Activated B cell treated with CpG ODN at 0.5 μM for 24 hours (primary cell): ENCODE measurements at regions of chr11 and their contacts with region 1.

Region 1: DNA sequence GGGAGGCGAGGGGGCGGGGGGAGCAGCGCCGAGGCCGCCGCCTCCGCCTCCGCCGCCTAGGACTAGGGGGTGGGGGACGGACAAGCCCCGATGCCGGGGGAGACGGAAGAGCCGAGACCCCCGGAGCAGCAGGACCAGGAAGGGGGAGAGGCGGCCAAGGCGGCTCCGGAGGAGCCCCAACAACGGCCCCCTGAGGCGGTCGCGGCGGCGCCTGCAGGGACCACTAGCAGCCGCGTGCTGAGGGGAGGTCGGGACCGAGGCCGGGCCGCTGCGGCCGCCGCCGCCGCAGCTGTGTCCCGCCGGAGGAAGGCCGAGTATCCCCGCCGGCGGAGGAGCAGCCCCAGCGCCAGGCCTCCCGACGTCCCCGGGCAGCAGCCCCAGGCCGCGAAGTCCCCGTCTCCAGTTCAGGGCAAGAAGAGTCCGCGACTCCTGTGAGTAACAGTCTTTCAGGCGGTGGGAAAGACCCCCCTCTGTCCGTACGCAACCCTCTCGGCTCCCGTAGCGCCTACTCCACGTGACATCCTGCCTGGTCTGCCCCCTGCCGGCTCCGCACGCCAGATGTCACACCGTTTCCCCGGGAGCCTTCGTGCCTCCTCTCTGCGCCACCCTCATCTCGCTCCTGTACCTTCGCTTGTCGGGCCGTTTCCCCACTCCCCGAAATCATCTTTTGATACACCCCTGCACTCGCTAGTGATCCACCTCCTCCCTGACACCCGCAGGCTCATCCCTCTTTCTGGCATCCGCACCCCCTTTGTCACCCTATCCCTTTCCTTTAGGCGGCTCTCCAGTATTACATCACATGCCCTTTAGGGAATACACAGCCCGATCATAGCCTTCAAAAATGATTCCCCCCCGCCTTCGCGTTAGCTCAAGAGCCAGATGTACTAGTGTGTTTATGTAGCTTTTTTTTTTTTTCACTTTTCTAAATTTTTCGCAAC is 598 bp downstream of the ZFP91 start:
- DNase-seq: peak; percentile 87
- ATAC-seq: peak; percentile 33
- H3K4me3 Mint-ChIP-seq: peak overlapping the region; percentile 96
- H3K27ac Mint-ChIP-seq: peak overlapping the region; percentile 100
- H3K4me1 Mint-ChIP-seq: peaks cover 79% of the 10 kb centered on the region
- H3K27me3 Mint-ChIP-seq: no peaks in the 10 kb centered on the region
- CTCF ChIP-seq: no peak

Region 2: DNA sequence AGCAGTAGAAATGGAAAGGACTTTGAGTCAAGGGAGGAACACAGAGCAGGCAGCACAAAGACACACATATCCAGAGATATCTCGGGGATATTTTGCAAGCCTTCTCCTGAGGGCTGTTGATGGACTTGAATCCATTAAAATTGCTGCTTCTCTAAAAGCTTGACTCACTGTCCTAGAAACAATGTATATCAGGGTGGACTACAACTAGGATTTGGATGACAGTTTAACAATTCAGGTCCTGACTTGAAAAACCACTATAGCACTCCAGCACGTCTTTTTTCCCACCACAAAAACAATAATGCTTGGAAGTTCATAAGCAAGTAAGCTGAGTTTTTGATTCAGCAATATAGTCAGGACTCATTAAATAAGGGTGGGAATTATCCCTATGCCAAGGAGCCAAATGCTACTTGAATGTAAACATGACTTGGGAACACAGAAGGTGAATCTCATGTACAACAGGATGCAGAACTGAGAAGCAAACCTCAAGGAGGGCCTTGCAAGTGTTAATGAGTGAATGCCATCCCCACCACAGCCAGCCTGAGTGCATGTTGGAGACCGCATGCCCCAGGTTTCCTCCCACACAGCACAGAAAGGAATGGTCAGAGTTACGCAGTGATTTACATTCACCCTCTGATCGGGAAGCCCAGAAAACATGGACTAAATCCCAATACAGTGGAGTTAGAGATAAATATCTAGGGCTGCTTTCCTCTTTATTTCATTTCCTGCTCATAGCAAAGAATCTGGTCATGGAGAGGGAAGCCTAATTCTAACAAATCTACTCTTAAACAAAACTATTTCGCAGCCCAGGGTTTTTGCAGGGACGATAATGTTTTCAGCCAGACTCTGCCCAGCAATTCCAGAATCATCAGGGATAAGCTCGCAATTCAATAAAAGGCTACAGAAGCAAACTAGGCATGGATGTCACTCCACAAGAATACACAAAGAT is 1732.6 kb before region 1 on chr11:
- CTCF ChIA-PET with region 1: no interaction called
- POLR2A ChIA-PET with region 1: no interaction called
- intact Hi-C with region 1: no loop called
- DNase-seq: no peak
- ATAC-seq: no peak
- H3K4me3 Mint-ChIP-seq: no peak overlapping the region
- H3K27ac Mint-ChIP-seq: no peak overlapping the region
- H3K4me1 Mint-ChIP-seq: no peaks in the 10 kb centered on the region
- H3K27me3 Mint-ChIP-seq: no peaks in the 10 kb centered on the region
- CTCF ChIP-seq: no peak

Region 3: GRCh38 chr11:57426929-57427726 is 1152.3 kb before region 1 on chr11 and contains the start of gene SLC43A3:
- CTCF ChIA-PET with region 1: no interaction called
- POLR2A ChIA-PET with region 1: interaction called, 6 read pairs
- intact Hi-C with region 1: loop called (anchors 2 kb)
- DNase-seq: peak; percentile 72
- ATAC-seq: peak; percentile 69
- H3K4me3 Mint-ChIP-seq: peak within 1 kb of the TSS; percentile 92
- H3K27ac Mint-ChIP-seq: peak within 1 kb of the TSS; percentile 91
- H3K4me1 Mint-ChIP-seq: peaks cover 47% of the 10 kb centered on the region
- H3K27me3 Mint-ChIP-seq: no peaks in the 10 kb centered on the region
- CTCF ChIP-seq: no peak
- total RNA-seq, gene SLC43A3: 213 and 237 TPM in 2 replicates

Region 4: DNA sequence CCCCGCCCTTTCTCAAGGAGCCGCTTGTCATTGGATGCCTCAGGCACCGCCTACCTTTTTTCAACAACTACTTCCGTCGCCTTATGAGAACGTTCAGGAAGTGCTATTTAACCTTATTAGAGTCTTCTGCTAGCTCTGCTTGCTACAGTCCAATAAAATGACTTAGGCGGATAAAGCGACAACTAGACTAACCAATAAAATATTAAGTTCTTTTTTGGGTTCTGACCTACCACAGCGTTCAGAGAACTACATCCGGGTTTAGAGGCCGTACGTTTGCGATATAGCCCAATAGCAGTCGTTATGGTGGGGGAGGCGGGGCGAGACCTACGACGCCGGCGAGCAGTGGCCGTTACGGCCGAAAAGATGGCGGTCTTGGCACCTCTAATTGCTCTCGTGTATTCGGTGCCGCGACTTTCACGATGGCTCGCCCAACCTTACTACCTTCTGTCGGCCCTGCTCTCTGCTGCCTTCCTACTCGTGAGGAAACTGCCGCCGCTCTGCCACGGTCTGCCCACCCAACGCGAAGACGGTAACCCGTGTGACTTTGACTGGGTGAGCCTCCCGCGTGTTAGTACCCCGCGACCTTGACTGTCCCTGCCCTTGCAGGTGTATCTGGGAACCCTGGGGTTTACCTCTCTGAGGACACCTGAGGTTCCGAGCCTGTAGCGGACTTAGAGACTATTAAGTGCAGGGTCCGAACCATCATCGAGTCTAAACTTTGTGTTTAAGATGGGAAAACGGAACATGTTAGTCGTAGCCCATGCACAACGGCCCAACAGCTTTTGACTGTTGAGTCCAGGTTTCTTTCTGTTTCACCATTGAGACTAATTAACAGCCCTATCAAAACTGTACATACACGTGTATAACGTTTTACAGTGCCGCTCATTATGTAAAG is 867.0 kb before region 1 on chr11 and contains the start of gene TMX2:
- CTCF ChIA-PET with region 1: no interaction called
- POLR2A ChIA-PET with region 1: no interaction called
- intact Hi-C with region 1: loop called (anchors 1 kb)
- DNase-seq: peak; percentile 75
- ATAC-seq: peak; percentile 87
- H3K4me3 Mint-ChIP-seq: peak within 1 kb of the TSS; percentile 98
- H3K27ac Mint-ChIP-seq: peak within 1 kb of the TSS; percentile 96
- H3K4me1 Mint-ChIP-seq: peaks cover 47% of the 10 kb centered on the region
- H3K27me3 Mint-ChIP-seq: no peaks in the 10 kb centered on the region
- CTCF ChIP-seq: no peak
- total RNA-seq, gene TMX2: 53.2 and 53.3 TPM in 2 replicates

Region 5: GRCh38 chr11:58609723-58610122 is 30.3 kb after region 1 on chr11:
- CTCF ChIA-PET with region 1: interaction called, 3 read pairs
- POLR2A ChIA-PET with region 1: interaction called, 35 read pairs
- intact Hi-C with region 1: loop called (anchors 1 kb)
- DNase-seq: no peak
- ATAC-seq: no peak
- H3K4me3 Mint-ChIP-seq: no peak overlapping the region
- H3K27ac Mint-ChIP-seq: peak overlapping the region; percentile 53
- H3K4me1 Mint-ChIP-seq: peaks cover 40% of the 10 kb centered on the region
- H3K27me3 Mint-ChIP-seq: no peaks in the 10 kb centered on the region
- CTCF ChIP-seq: no peak

Region 6: DNA sequence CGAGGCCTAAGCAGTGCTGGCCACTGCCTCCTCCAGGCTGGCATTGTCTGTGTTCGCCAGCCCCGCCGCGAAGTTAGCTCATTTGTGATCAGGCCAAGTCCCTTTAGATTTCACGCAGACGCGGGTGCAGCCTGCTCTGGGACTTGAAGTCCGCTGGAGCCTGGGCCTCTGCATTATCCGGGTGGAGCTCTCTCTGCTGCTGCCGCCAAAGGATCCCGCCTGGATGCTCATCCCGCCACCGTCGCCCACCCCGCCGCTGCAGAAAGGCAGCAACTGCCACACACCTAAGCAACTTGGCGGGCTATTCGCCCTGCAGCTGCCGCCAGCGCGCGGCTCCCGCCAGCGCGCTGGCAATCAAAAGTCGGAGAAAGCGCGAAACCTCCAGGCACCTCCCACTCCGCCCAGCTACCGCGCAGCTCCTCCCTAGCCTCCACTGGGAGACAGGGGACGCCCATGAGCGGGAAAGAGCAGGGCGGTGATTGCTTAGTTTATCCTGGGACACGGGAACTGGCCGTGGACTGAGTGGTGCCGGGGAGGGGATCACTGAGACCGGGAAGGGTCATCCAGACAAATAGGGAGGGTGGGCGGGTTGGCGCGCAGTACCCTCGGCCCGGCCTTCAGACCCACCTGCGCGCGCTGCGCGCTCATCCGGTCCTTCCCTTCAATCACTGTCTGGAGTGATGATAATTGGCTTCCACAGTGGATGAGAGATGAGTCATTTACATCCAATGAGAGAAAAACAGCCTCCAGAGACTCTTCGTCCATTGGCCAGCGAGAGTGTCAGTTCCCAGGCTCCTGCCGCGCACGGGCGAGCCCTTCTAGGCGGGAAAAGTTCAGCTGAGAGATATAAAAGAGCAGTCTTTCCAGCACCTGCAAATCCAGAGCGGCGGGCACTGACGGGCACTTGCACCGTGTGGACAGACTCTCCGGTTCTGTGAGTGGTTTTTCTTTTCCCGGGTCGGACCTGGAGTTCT is 527.2 kb after region 1 on chr11 and contains the start of gene FAM111B:
- CTCF ChIA-PET with region 1: no interaction called
- POLR2A ChIA-PET with region 1: interaction called, 9 read pairs
- intact Hi-C with region 1: loop called (anchors 1 kb)
- DNase-seq: peak; percentile 43
- ATAC-seq: peak; percentile 33
- H3K4me3 Mint-ChIP-seq: peak within 1 kb of the TSS; percentile 94
- H3K27ac Mint-ChIP-seq: peak within 1 kb of the TSS; percentile 84
- H3K4me1 Mint-ChIP-seq: peaks cover 84% of the 10 kb centered on the region
- H3K27me3 Mint-ChIP-seq: no peaks in the 10 kb centered on the region
- CTCF ChIP-seq: no peak
- total RNA-seq, gene FAM111B: 48.0 and 49.1 TPM in 2 replicates

Region 7: GRCh38 chr11:59283825-59284772 is 704.6 kb after region 1 on chr11:
- CTCF ChIA-PET with region 1: no interaction called
- POLR2A ChIA-PET with region 1: interaction called, 3 read pairs
- intact Hi-C with region 1: loop called (anchors 5 kb)
- DNase-seq: peak; percentile 55
- ATAC-seq: peak; percentile 73
- H3K4me3 Mint-ChIP-seq: peak overlapping the region; percentile 70
- H3K27ac Mint-ChIP-seq: peak overlapping the region; percentile 87
- H3K4me1 Mint-ChIP-seq: peaks cover 57% of the 10 kb centered on the region
- H3K27me3 Mint-ChIP-seq: no peaks in the 10 kb centered on the region
- CTCF ChIP-seq: peak; percentile 59